HCT116 (cell line): ENCODE measurements at regions of chr12 and their contacts with region 1.

Region 1: GRCh38 chr12:15522565-15523187 is 200.4 kb downstream of the PTPRO start:
- DNase-seq: peak; percentile 36
- ATAC-seq: peak; percentile 54
- H3K4me3 ChIP-seq: no peak overlapping the region
- H3K27ac ChIP-seq: no peak overlapping the region
- H3K4me1 ChIP-seq: no peaks in the 10 kb centered on the region
- H3K27me3 ChIP-seq: peaks cover 7% of the 10 kb centered on the region; the same call in 1 of the 2 replicates
- CTCF ChIP-seq: peak; percentile 54 to 73 (median 71)
- POLR2A ChIP-seq: no peak
- RAD21 ChIP-seq: peak; percentile 84

Region 2: DNA sequence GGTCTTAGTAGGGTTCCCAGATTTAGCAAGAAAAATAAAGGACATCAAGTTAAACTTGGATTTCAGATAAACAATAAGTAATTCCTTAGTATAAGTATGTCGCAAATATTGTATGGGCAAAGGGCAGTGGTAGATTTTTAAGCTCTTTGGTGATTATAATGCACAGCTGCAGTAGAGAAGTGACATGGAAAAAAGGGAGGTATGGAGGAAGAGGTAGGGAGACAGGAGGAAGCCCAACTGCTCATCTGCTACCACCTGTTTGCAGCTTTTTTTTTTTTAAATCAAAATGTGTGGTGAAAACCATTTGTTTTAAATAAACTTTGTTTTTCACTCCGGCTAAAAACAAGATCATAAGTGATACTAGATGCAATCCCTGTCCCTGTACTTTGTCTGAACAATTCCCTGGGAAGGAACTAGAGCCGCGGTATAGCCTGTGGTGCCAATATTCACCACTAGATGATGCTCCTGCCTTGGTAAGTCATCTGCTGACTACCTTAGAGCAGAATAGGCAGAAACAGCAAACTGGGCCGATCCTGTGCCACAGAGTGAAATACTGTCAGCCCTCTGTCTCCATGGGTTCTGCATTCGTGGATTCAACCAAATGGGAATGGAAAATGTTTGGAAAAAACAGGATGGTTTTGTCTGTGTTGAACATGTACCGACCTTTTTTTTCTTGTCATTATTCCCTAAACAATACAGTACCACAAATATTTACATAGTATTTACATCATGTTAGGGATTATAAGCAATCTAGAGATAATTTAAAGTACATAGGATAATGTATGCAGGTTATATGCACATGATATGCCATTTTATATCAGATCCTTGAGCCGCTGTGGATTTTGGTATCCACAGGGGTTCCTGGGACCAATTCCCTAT is 892.6 kb before region 1 on chr12:
- CTCF ChIA-PET with region 1: no interaction called
- POLR2A ChIA-PET with region 1: no interaction called
- RAD21 ChIA-PET with region 1: no interaction called
- intact Hi-C with region 1: loop called (anchors 10 kb)
- DNase-seq: peak; percentile 67
- ATAC-seq: peak; percentile 100
- H3K4me3 ChIP-seq: no peak overlapping the region
- H3K27ac ChIP-seq: no peak overlapping the region
- H3K4me1 ChIP-seq: no peaks in the 10 kb centered on the region
- H3K27me3 ChIP-seq: no peaks in the 10 kb centered on the region
- CTCF ChIP-seq: peak; percentile 84 to 99 (median 95)
- POLR2A ChIP-seq: no peak
- RAD21 ChIP-seq: peak; percentile 93

Region 3: GRCh38 chr12:14845350-14845750 is 677.3 kb before region 1 on chr12:
- CTCF ChIA-PET with region 1: no interaction called
- POLR2A ChIA-PET with region 1: no interaction called
- RAD21 ChIA-PET with region 1: no interaction called
- intact Hi-C with region 1: loop called (anchors 10 kb)
- DNase-seq: peak; percentile 37
- ATAC-seq: peak; percentile 87
- H3K4me3 ChIP-seq: no peak overlapping the region
- H3K27ac ChIP-seq: no peak overlapping the region
- H3K4me1 ChIP-seq: peaks cover 0 to 10% of the 10 kb centered on the region in 2 experiments; a peak in 2 of 4 replicates
- H3K27me3 ChIP-seq: no peaks in the 10 kb centered on the region
- CTCF ChIP-seq: peak; percentile 67 to 86 (median 84)
- POLR2A ChIP-seq: no peak
- RAD21 ChIP-seq: peak; percentile 87

Region 4: DNA sequence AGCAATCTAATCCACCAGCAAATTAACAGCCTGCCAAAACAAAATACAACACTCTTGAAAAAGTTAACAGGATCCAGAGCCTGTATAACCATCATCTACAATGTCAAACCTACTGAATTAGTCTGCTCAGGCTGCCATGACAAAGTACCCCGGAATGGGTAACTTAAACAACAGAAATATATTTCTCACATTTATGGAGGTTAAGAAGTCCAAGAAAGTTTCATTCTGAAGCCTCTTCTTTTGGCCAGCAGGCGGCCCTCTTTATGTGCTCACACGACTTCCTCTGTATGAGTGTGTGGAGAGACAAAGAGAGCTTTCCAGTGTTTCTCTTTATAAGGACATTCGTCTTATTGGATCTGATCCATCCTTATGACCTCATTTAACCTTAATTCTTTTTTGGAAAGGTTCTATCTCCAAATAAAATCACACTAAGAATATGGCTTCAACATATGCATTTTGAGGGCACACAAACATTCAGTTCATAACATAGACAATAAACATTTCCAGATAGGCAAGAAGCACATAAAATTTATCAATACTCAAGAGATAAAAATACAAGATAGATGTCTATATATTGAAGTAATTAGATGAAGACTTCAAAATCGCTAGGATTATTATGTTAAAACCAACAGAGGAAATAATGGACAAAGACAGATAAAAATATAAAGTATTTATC is 295.5 kb before region 1 on chr12:
- CTCF ChIA-PET with region 1: interaction called, 6 read pairs
- POLR2A ChIA-PET with region 1: interaction called, 3 read pairs
- RAD21 ChIA-PET with region 1: no interaction called
- intact Hi-C with region 1: loop called (anchors 2 kb)
- DNase-seq: peak; percentile 42
- ATAC-seq: peak; percentile 81
- H3K4me3 ChIP-seq: no peak overlapping the region
- H3K27ac ChIP-seq: no peak overlapping the region
- H3K4me1 ChIP-seq: no peaks in the 10 kb centered on the region
- H3K27me3 ChIP-seq: peaks cover 26% of the 10 kb centered on the region; the same call in 1 of the 2 replicates
- CTCF ChIP-seq: peak; percentile 62 to 79 (median 67)
- POLR2A ChIP-seq: no peak
- RAD21 ChIP-seq: peak; percentile 49

Region 5: GRCh38 chr12:15276088-15276698 is 246.5 kb before region 1 on chr12:
- CTCF ChIA-PET with region 1: interaction called, 19 read pairs
- POLR2A ChIA-PET with region 1: no interaction called
- RAD21 ChIA-PET with region 1: no interaction called
- intact Hi-C with region 1: loop called (anchors 1 kb)
- DNase-seq: peak; percentile 16
- ATAC-seq: peak; percentile 76
- H3K4me3 ChIP-seq: no peak overlapping the region
- H3K27ac ChIP-seq: no peak overlapping the region
- H3K4me1 ChIP-seq: no peaks in the 10 kb centered on the region
- H3K27me3 ChIP-seq: no peaks in the 10 kb centered on the region
- CTCF ChIP-seq: peak; percentile 53 to 75 (median 55); a peak in 4 of 6 replicates
- POLR2A ChIP-seq: no peak
- RAD21 ChIP-seq: peak; percentile 69

Region 6: DNA sequence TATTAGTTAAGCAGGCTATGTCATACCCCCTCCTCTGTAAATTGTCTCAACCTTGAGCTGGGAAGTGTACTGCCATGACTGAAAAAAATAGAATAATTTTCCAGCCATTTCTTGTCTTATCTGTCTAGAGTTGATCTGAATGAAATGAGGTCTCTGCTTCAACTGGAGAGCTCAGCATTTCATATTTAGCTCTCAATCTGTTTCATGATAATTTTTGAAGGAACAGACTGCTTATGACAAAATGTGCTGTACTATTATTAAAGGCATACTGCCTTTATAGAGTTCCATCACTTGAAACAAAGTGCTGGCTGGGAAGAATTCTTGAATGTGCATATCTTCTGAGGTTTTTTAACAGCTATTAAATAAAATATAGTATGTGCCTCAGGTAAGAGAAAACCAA is 181.3 kb before region 1 on chr12:
- CTCF ChIA-PET with region 1: no interaction called
- POLR2A ChIA-PET with region 1: no interaction called
- RAD21 ChIA-PET with region 1: no interaction called
- intact Hi-C with region 1: no loop called
- DNase-seq: no peak
- ATAC-seq: no peak
- H3K4me3 ChIP-seq: no peak overlapping the region
- H3K27ac ChIP-seq: no peak overlapping the region
- H3K4me1 ChIP-seq: no peaks in the 10 kb centered on the region
- H3K27me3 ChIP-seq: peaks cover 63% of the 10 kb centered on the region
- CTCF ChIP-seq: no peak
- POLR2A ChIP-seq: no peak
- RAD21 ChIP-seq: no peak

Region 7: GRCh38 chr12:15856097-15856982 is 333.7 kb after region 1 on chr12:
- CTCF ChIA-PET with region 1: interaction called, 11 read pairs
- POLR2A ChIA-PET with region 1: no interaction called
- RAD21 ChIA-PET with region 1: no interaction called
- intact Hi-C with region 1: no loop called
- DNase-seq: peak; percentile 68
- ATAC-seq: peak; percentile 84
- H3K4me3 ChIP-seq: no peak overlapping the region
- H3K27ac ChIP-seq: no peak overlapping the region
- H3K4me1 ChIP-seq: peaks cover 2 to 13% of the 10 kb centered on the region in 2 experiments; a peak in 3 of 4 replicates
- H3K27me3 ChIP-seq: no peaks in the 10 kb centered on the region
- CTCF ChIP-seq: peak; percentile 54 to 94 (median 68)
- POLR2A ChIP-seq: no peak
- RAD21 ChIP-seq: peak; percentile 97